ENCODE measurements at regions of chr17 and their contacts with region 1.

Region 1: GRCh38 chr17:18183334-18184142 is at the start of gene ALKBH5:
- DNase-seq: peak; percentile 95
- ATAC-seq: peak; percentile 91
- H3K4me3 Mint-ChIP-seq: peak within 1 kb of the TSS; percentile 93
- H3K27ac Mint-ChIP-seq: peak within 1 kb of the TSS; percentile 99
- H3K4me1 Mint-ChIP-seq: peaks cover 45% of the 10 kb centered on the region
- H3K27me3 Mint-ChIP-seq: no peaks in the 10 kb centered on the region
- CTCF ChIP-seq: peak; percentile 18; the same call in 1 of the 2 replicates
- total RNA-seq, gene ALKBH5: 105 to 115 TPM (median 111 TPM) in 3 replicates

Region 2: DNA sequence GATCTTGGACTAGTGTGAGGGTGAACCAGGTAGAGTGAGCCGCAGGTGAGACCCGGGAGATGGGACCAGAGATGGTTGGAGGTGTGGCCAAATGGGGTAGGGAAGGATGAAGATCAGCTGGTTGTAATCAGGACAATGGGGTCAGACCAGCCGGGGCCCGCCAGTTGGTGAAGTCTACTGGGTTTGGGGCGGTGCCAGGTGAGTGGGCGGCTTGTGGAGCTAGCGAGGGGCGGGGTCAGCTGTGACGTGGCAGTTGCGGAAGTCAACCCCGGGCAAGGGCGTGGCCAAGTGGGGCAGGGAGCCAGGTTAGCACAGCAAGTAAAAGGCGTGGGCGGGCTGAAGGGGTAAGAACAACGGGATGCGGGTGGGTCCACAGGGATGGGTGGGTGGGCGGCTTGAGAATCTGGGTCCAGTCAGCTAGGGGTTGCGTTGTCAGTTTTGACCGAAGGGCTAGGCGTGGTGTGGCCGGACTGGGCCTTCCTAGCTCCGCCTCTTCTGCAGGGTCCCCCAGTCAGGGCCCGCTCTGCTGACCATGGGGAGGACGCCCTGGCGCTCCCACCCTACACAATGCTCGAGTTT is 25.4 kb before region 1 on chr17:
- CTCF ChIA-PET with region 1: interaction called, 15 read pairs
- POLR2A ChIA-PET with region 1: interaction called, 17 read pairs
- DNase-seq: peak; percentile 99
- ATAC-seq: peak; percentile 79
- H3K4me3 Mint-ChIP-seq: peak overlapping the region; percentile 83
- H3K27ac Mint-ChIP-seq: peak overlapping the region; percentile 96
- H3K4me1 Mint-ChIP-seq: peaks cover 7% of the 10 kb centered on the region
- H3K27me3 Mint-ChIP-seq: no peaks in the 10 kb centered on the region; the same call in 1 of the 2 replicates
- CTCF ChIP-seq: no peak

Region 3: GRCh38 chr17:18203308-18203707 is 19.8 kb after region 1 on chr17:
- CTCF ChIA-PET with region 1: interaction called, 10 read pairs
- POLR2A ChIA-PET with region 1: no interaction called
- DNase-seq: no peak
- ATAC-seq: peak; percentile 24; the same call in 1 of the 2 replicates
- H3K4me3 Mint-ChIP-seq: no peak overlapping the region
- H3K27ac Mint-ChIP-seq: peak overlapping the region; percentile 80; the same call in 1 of the 2 replicates
- H3K4me1 Mint-ChIP-seq: peaks cover 7% of the 10 kb centered on the region; the same call in 1 of the 2 replicates
- H3K27me3 Mint-ChIP-seq: no peaks in the 10 kb centered on the region
- CTCF ChIP-seq: no peak

Measured in WTC11 (cell line).